ENCODE measurements at regions of chr2 and their contacts with region 1.

Region 1: GRCh38 chr2:27102329-27102728 is 15.8 kb downstream of the KHK start:
- DNase-seq: no peak
- H3K4me3 ChIP-seq: no peak overlapping the region
- H3K27ac ChIP-seq: no peak overlapping the region
- H3K4me1 ChIP-seq: no peaks in the 10 kb centered on the region
- H3K27me3 ChIP-seq: no peaks in the 10 kb centered on the region
- CTCF ChIP-seq: no peak

Region 2: DNA sequence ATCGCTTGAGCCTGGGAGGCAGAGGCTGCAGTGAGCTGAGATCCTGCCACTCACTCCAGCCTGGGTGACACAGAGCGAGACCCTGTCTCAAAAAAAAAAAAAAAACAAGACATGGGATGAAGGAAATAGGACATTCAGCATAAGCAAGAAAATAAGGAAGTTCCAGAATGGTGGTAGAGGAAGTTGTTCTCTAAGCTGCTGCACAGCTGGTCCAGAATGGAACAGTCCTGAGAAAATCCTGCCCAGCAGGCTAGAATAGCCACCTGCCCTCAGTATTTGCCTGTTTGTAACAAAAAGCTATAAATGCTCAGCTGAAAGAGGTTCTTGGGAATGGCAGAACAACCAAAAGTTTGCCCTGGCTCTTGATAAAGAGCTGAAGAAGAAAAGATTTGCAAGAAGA is 143.0 kb before region 1 on chr2:
- CTCF ChIA-PET with region 1: no interaction called
- POLR2A ChIA-PET with region 1: interaction called, 11 read pairs
- intact Hi-C with region 1: no loop called
- DNase-seq: no peak
- H3K4me3 ChIP-seq: no peak overlapping the region
- H3K27ac ChIP-seq: no peak overlapping the region
- H3K4me1 ChIP-seq: peaks cover 4% of the 10 kb centered on the region
- H3K27me3 ChIP-seq: no peaks in the 10 kb centered on the region
- CTCF ChIP-seq: no peak

Region 3: GRCh38 chr2:27010139-27010538 is 92.2 kb before region 1 on chr2:
- CTCF ChIA-PET with region 1: no interaction called
- POLR2A ChIA-PET with region 1: no interaction called
- intact Hi-C with region 1: no loop called
- DNase-seq: no peak
- H3K4me3 ChIP-seq: no peak overlapping the region
- H3K27ac ChIP-seq: no peak overlapping the region
- H3K4me1 ChIP-seq: peaks cover 1% of the 10 kb centered on the region
- H3K27me3 ChIP-seq: no peaks in the 10 kb centered on the region
- CTCF ChIP-seq: no peak

Region 4: GRCh38 chr2:27249891-27250651 is 147.7 kb after region 1 on chr2:
- CTCF ChIA-PET with region 1: no interaction called
- POLR2A ChIA-PET with region 1: interaction called, 14 read pairs
- intact Hi-C with region 1: no loop called
- DNase-seq: peak; percentile 69
- H3K4me3 ChIP-seq: no peak overlapping the region
- H3K27ac ChIP-seq: no peak overlapping the region
- H3K4me1 ChIP-seq: no peaks in the 10 kb centered on the region
- H3K27me3 ChIP-seq: no peaks in the 10 kb centered on the region
- CTCF ChIP-seq: peak; percentile 91

Region 5: DNA sequence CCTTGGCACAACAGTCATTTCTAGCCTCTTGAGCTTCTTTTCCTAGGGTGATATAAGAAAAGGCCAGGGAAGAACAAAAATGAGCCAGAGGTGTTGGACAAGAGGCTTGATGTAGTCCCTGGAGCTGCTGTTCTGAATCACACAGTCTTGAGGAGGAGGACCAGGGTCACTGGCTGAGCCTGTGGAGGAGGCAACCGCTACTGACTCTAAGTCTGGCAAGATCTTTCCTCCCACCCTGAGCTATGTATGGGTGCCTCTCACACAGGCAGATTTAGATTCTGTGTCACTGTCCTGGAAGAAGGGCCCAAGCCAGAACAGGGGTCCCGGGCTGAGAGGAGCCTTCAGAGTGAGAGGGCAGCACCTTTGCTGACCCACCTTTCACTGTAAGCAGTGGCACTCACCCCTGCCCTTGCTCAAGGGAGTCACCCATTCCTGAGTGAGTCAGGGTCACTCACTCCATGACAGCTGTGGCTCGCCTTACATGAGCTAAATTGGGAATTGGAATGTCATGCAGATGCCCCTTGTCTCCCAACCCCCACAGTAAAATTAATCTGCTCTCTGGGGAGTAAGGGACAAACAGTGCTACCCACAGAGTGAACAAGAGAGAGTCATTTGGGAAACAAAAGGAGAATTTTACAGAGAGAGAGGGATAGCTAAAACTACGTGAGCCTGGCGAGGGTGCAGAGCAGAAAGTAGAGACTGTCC is 179.7 kb after region 1 on chr2 and contains the start of gene TRIM54:
- CTCF ChIA-PET with region 1: interaction called, 6 read pairs
- POLR2A ChIA-PET with region 1: no interaction called
- intact Hi-C with region 1: loop called (anchors 2 kb)
- DNase-seq: peak; percentile 43
- H3K4me3 ChIP-seq: no peak within 1 kb of the TSS
- H3K27ac ChIP-seq: no peak within 1 kb of the TSS
- H3K4me1 ChIP-seq: peaks cover 16% of the 10 kb centered on the region
- H3K27me3 ChIP-seq: no peaks in the 10 kb centered on the region
- CTCF ChIP-seq: no peak
- total RNA-seq, gene TRIM54: 2.2 and 2.8 TPM in 2 replicates

Region 6: DNA sequence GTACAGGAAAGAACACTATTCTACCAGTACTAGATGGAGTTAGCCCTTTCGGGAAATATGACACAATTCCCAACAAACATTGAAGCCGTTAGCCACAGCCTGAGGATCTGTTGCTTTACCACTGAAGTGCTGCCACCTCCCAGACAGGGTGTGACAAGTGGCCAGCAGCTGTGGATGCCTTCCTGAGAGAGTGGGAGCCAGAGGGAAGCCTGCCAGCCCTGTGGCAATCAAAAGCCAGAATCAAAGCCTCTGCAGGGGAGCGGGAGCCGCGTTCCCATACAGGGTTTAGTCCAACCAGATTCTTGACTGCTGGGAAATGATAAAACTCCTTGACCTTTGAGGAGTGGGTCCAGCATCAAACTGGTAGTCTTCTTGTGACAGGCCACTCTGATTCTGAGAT is 599.3 kb after region 1 on chr2:
- CTCF ChIA-PET with region 1: no interaction called
- POLR2A ChIA-PET with region 1: no interaction called
- intact Hi-C with region 1: no loop called
- DNase-seq: peak; percentile 30
- H3K4me3 ChIP-seq: no peak overlapping the region
- H3K27ac ChIP-seq: no peak overlapping the region
- H3K4me1 ChIP-seq: no peaks in the 10 kb centered on the region
- H3K27me3 ChIP-seq: no peaks in the 10 kb centered on the region
- CTCF ChIP-seq: no peak

Measured in A673 (cell line).